Lower leg skin (tissue), 4 donors: ENCODE measurements at regions of chr5 and their contacts with region 1.

Region 1: GRCh38 chr5:43105369-43106289 is 15.1 kb upstream of the ZNF131 start:
- DNase-seq: peak; percentile 87 to 97
- H3K4me3 ChIP-seq: no peak overlapping the region
- CTCF ChIP-seq: peak in 2 of 3 donors; percentile 82 to 97
- POLR2A ChIP-seq: no peak

Region 2: GRCh38 chr5:43305948-43306565 is 200.4 kb after region 1 on chr5:
- intact Hi-C with region 1: loop called (anchors 10 kb)
- DNase-seq: no peak
- H3K4me3 ChIP-seq: no peak overlapping the region
- CTCF ChIP-seq: no peak
- POLR2A ChIP-seq: no peak

Region 3: GRCh38 chr5:43389679-43390329 is 284.2 kb after region 1 on chr5:
- intact Hi-C with region 1: loop called (anchors 10 kb)
- DNase-seq: peak in 1 of 2 donors; percentile 56
- H3K4me3 ChIP-seq: no peak overlapping the region
- CTCF ChIP-seq: no peak
- POLR2A ChIP-seq: no peak